ENCODE measurements at regions of chr6 and their contacts with region 1.

Region 1: DNA sequence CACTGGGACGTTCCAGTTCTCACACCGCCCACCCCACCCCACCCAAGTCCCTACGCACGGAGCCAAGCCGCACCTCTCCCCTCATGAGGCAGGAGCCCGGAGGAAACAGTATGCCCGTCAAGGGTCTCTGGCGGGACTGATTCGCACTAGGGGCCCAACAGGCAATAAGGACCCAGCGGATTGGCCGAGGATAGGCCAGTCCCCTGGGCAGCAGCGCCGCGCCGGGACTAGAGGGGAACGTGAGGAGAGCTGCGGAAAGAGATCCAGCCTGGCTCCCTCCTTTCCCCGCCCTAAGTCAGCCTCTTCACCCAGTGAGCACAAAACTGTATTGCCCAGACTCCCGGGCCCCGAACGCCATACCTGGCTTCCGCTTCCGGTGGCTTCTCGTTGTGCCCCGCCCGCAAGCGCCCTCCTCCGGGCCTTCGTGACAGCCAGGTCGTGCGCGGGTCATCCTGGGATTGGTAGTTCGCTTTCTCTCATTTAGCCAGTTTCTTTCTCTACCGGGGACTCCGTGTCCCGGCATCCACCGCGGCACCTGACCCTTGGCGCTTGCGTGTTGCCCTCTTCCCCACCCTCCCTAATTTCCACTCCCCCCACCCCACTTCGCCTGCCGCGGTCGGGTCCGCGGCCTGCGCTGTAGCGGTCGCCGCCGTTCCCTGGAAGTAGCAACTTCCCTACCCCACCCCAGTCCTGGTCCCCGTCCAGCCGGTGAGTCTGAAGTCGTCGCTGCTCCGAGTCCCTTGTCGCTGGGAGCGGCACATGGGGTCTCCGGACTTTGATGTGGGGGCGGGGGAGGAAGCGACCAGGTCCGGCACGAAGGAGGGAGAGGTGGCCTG is at the start of gene CSNK2B:
- DNase-seq: peak; percentile 98 to 100 (median 99)
- ATAC-seq: peak; percentile 85
- H3K4me3 ChIP-seq: peak within 1 kb of the TSS; percentile 66
- H3K27ac ChIP-seq: peak within 1 kb of the TSS; percentile 97
- H3K4me1 ChIP-seq: peaks cover 36 to 39% of the 10 kb centered on the region in 2 experiments; a peak in 4 of 5 replicates
- H3K27me3 ChIP-seq: no peaks in the 10 kb centered on the region
- CTCF ChIP-seq: peak; percentile 18 to 42 (median 33); a peak in 4 of 6 replicates
- EP300 ChIP-seq: peak; percentile 47
- POLR2A ChIP-seq: peak; percentile 99
- RAD21 ChIP-seq: no peak
- polyA plus RNA-seq, gene CSNK2B: 870 to 972 TPM

Region 2: GRCh38 chr6:31546962-31547726 is 118.6 kb before region 1 on chr6 and contains the start of gene NFKBIL1:
- CTCF ChIA-PET with region 1: no interaction called
- POLR2A ChIA-PET with region 1: interaction called, 12 read pairs
- in situ Hi-C with region 1: loop called (anchors 5 kb)
- intact Hi-C with region 1: loop called (anchors 2 kb)
- DNase-seq: peak; percentile 92 to 100 (median 94)
- ATAC-seq: peak; percentile 93
- H3K4me3 ChIP-seq: peak within 1 kb of the TSS; percentile 52
- H3K27ac ChIP-seq: peak within 1 kb of the TSS; percentile 81
- H3K4me1 ChIP-seq: peaks cover 10 to 14% of the 10 kb centered on the region in 2 experiments; a peak in 4 of 5 replicates
- H3K27me3 ChIP-seq: no peaks in the 10 kb centered on the region
- CTCF ChIP-seq: no peak; a peak in 1 of 6 replicates
- EP300 ChIP-seq: peak; percentile 37; the same call in 1 of the 2 replicates
- POLR2A ChIP-seq: peak; percentile 71
- RAD21 ChIP-seq: peak in 1 of 2 experiments; percentile 14; a peak in 1 of 4 replicates
- polyA plus RNA-seq, gene NFKBIL1: 0.49 to 0.59 TPM

Region 3: DNA sequence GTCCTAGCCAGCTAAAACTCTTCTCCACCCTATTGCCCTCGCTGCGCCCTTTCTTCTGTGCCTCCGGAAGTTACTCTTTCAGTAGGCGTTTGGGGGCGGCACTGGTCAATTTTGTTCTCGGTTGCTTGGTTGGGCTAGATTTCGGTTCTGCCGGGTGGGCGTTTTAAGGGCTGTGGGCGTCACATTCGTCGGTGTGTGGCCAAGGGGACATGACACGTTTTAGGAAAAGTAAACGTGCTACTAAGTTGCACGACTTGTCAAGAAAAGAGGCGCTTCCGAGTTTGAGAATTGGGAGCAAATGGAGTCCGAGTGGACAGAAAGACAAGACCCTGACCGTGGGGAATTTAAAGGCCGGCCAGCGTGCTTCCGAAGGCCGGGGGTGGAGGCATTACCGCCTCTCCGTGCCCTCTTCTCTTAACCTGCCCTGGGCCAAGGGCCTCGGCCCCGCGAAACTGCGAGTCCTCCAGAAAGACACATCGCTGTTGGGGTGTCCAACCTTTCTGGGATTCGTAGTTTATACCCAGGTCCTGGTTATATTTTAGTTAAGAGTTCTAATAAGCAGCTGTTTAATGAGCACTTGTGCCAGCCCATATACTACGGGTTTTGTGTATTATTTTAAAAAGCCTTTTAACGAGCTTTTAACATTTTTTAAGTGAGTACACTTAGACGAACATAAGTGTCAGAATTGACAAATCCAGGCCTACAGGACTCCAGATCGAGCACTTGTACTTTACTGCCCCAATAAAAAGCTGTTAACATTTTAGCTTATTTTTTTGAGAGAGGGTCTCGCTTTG is 12.6 kb before region 1 on chr6:
- CTCF ChIA-PET with region 1: no interaction called
- POLR2A ChIA-PET with region 1: interaction called, 267 read pairs
- in situ Hi-C with region 1: no loop called
- intact Hi-C with region 1: loop called (anchors 1 kb)
- DNase-seq: peak; percentile 94 to 99 (median 96)
- ATAC-seq: peak; percentile 83
- H3K4me3 ChIP-seq: peak overlapping the region; percentile 73
- H3K27ac ChIP-seq: peak overlapping the region; percentile 98
- H3K4me1 ChIP-seq: peaks cover 22 to 26% of the 10 kb centered on the region in 2 experiments
- H3K27me3 ChIP-seq: no peaks in the 10 kb centered on the region
- CTCF ChIP-seq: peak; percentile 43 to 72 (median 54)
- EP300 ChIP-seq: no peak; the same call in 1 of the 2 replicates
- POLR2A ChIP-seq: peak; percentile 98
- RAD21 ChIP-seq: peak in 1 of 2 experiments; percentile 52; a peak in 2 of 4 replicates

Region 4: DNA sequence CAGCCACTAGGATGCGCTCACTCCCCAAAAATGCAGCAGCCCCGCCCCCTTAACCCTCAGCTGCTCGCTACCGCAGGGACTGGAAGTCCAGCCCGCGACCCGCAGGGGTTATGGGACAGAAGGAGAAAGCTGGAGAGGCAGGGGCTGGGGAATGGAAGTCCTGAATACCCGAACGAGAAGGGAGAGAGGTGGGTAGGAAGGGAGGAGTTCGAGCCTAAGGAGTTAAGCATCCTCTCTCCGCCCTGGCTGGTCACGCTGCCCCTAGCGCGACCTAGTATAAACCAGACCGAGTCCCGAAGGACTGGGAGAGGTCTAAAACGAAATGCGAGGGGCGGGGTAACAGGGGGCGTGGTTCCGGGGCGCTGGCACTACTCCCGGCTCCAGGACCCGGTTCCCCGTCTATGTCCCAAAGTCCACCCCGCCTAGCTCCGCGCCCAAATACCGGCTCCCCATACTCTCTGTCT is 63.8 kb after region 1 on chr6:
- CTCF ChIA-PET with region 1: no interaction called
- POLR2A ChIA-PET with region 1: interaction called, 182 read pairs
- in situ Hi-C with region 1: no loop called
- intact Hi-C with region 1: no loop called
- DNase-seq: peak; percentile 91 to 97 (median 94)
- ATAC-seq: peak; percentile 84
- H3K4me3 ChIP-seq: peak overlapping the region; percentile 65
- H3K27ac ChIP-seq: peak overlapping the region; percentile 75
- H3K4me1 ChIP-seq: peaks cover 53 to 67% of the 10 kb centered on the region in 2 experiments
- H3K27me3 ChIP-seq: no peaks in the 10 kb centered on the region
- CTCF ChIP-seq: peak; percentile 12 to 99 (median 95); a peak in 5 of 6 replicates
- EP300 ChIP-seq: no peak; the same call in 1 of the 2 replicates
- POLR2A ChIP-seq: no peak; the same call in 1 of the 2 replicates
- RAD21 ChIP-seq: peak; percentile 99

Region 5: GRCh38 chr6:31806465-31807272 is 140.9 kb after region 1 on chr6 and contains the start of gene LSM2:
- CTCF ChIA-PET with region 1: no interaction called
- POLR2A ChIA-PET with region 1: interaction called, 11 read pairs
- in situ Hi-C with region 1: no loop called
- intact Hi-C with region 1: no loop called
- DNase-seq: peak; percentile 100
- ATAC-seq: peak; percentile 98
- H3K4me3 ChIP-seq: peak within 1 kb of the TSS; percentile 66
- H3K27ac ChIP-seq: peak within 1 kb of the TSS; percentile 86
- H3K4me1 ChIP-seq: peaks cover 14 to 30% of the 10 kb centered on the region in 2 experiments
- H3K27me3 ChIP-seq: no peaks in the 10 kb centered on the region
- CTCF ChIP-seq: peak; percentile 20 to 66 (median 36); a peak in 5 of 6 replicates
- EP300 ChIP-seq: peak; percentile 32; the same call in 1 of the 2 replicates
- POLR2A ChIP-seq: peak; percentile 97
- RAD21 ChIP-seq: peak; percentile 28 to 42; a peak in 3 of 4 replicates
- polyA plus RNA-seq, gene LSM2: 405 to 407 TPM

Region 6: DNA sequence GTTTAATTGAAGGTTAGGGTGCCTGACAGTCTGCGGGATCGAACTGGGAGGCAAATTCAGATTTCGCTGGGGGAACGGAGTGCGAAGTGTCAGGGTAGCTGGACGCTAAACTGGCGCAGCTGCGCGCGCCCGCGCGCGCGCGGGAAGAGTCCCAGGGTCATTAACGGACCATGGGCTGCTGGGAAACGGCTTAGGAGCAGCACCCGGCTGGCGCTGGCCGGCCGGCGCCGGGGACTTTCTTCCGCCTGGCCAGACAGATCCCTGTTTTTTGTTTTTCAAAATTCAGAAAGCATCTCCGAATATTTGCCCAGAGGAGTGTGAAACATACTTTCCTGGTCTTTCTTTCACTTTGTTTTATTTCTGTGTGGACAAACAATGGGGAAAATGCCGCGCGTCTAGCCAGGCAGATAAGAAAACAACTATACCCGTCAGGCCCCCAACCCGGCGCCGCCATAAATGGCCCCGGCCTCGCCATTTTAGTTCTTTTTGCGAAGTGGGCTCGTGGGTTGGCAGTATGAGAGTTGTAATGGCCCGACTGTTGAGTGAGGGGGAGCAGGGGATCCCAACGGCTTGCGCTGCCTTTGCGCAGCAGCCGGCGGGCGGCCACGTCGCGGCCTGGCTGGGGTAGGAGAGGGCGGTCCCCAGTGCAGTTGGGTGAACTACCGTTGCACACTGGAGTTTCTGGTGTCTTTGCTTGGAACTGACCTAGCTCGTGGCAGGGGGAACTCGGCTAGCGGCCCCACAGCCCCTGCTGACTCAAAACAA is 168.9 kb after region 1 on chr6:
- CTCF ChIA-PET with region 1: no interaction called
- POLR2A ChIA-PET with region 1: interaction called, 119 read pairs
- in situ Hi-C with region 1: no loop called
- intact Hi-C with region 1: loop called (anchors 1 kb)
- DNase-seq: peak; percentile 88 to 99 (median 94)
- ATAC-seq: peak; percentile 79
- H3K4me3 ChIP-seq: peak overlapping the region; percentile 85
- H3K27ac ChIP-seq: peak overlapping the region; percentile 88
- H3K4me1 ChIP-seq: peaks cover 41 to 55% of the 10 kb centered on the region in 2 experiments
- H3K27me3 ChIP-seq: no peaks in the 10 kb centered on the region
- CTCF ChIP-seq: peak in 1 of 3 experiments; percentile 20; a peak in 1 of 6 replicates
- EP300 ChIP-seq: peak; percentile 83
- POLR2A ChIP-seq: peak; percentile 100
- RAD21 ChIP-seq: peak; percentile 1 to 33; a peak in 2 of 4 replicates